Calu3 (cell line): ENCODE measurements at regions of chr3 and their contacts with region 1.

Region 1: GRCh38 chr3:29759411-29760225 is 478.7 kb downstream of the RBMS3 start:
- DNase-seq: no peak
- H3K4me3 Mint-ChIP-seq: no peak overlapping the region
- H3K27ac Mint-ChIP-seq: no peak overlapping the region
- H3K4me1 Mint-ChIP-seq: peaks cover 37% of the 10 kb centered on the region
- H3K27me3 Mint-ChIP-seq: no peaks in the 10 kb centered on the region
- CTCF ChIP-seq: no peak

Region 2: DNA sequence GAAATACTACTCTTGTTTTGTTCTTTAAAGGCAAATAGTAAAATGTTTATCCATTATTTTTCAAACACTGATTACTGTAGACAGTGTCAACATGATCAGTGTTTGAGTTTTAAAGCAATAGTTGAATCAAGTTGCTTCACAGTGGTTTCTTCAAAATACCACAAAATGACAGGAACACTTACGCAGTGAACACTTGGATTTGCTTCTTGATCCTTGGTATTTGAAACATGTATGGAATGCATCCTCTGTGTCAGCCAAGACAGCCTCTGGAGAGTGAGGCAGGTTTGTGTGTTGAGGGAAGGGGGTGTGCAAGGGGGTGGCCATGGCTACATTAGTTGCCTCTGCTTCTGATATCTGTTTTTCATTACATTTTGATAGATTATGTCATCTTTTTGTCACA is 65.8 kb before region 1 on chr3:
- CTCF ChIA-PET with region 1: no interaction called
- intact Hi-C with region 1: loop called (anchors 5 kb)
- DNase-seq: peak; percentile 26
- H3K4me3 Mint-ChIP-seq: no peak overlapping the region
- H3K27ac Mint-ChIP-seq: peak overlapping the region; percentile 66
- H3K4me1 Mint-ChIP-seq: peaks cover 16% of the 10 kb centered on the region
- H3K27me3 Mint-ChIP-seq: no peaks in the 10 kb centered on the region
- CTCF ChIP-seq: no peak